CD4-positive, alpha-beta T cell (primary cell): ENCODE measurements at regions of chr16 and their contacts with region 1.

Region 1: DNA sequence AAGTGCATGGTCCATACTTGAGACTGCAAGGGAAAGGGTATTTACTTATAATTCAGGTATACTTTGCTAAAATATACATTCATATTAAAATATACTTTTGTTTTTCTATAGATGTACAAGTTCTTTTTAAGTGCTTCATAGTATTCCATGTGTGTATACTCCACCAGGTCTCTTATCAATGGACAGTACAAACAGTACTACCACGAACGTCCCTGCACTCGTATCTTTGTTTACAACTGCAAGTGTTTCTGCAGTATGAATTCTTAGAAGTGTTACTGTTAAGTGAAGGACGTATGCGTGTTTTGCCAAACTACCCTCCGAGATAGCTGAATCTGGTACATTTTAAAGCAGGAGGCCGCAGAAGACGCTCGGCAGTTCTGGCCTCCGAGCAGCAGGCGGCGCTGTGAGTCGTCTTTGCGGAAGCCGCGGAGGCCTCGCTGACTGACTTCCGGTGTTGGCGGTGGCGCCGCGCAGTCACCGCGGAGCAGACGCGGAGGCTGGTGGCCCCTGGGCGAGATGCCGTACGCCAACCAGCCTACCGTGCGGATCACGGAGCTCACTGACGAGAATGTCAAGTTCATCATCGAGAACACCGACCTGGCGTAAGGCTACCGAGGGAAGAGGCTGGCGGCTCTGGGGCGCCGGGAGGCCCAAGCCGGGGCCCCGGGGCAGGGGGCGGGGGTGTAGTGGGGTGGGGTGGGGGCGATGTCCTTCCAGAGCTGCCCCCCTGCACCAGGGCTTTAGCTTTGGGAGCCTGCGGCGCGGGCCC is at the start of gene POLR2C:
- DNase-seq: peak; percentile 86 to 96 (median 92)
- ATAC-seq: peak; percentile 96
- H3K4me3 ChIP-seq: peak within 1 kb of the TSS; percentile 79
- H3K4me3 Mint-ChIP-seq: peak within 1 kb of the TSS; percentile 100
- H3K27ac ChIP-seq: peak within 1 kb of the TSS; percentile 33 to 52
- H3K27ac Mint-ChIP-seq: peak within 1 kb of the TSS; percentile 92
- H3K4me1 ChIP-seq: peaks cover 32% of the 10 kb centered on the region
- H3K4me1 Mint-ChIP-seq: peaks cover 43% of the 10 kb centered on the region
- H3K27me3 ChIP-seq: no peaks in the 10 kb centered on the region
- H3K27me3 Mint-ChIP-seq: no peaks in the 10 kb centered on the region
- CTCF ChIP-seq: peak; percentile 99
- total RNA-seq, gene POLR2C: 124 to 125 TPM

Region 2: GRCh38 chr16:57091975-57092785 is 370.2 kb before region 1 on chr16 and contains the start of gene CPNE2:
- CTCF ChIA-PET with region 1: no interaction called
- POLR2A ChIA-PET with region 1: no interaction called
- intact Hi-C with region 1: loop called in 1 of 2 experiments (anchors 5 kb)
- DNase-seq: peak in 7 of 14 experiments; percentile 3 to 63 (median 34)
- ATAC-seq: peak; percentile 48
- H3K4me3 ChIP-seq: peak within 1 kb of the TSS; percentile 34
- H3K4me3 Mint-ChIP-seq: peak within 1 kb of the TSS; percentile 87
- H3K27ac ChIP-seq: no peak within 1 kb of the TSS
- H3K27ac Mint-ChIP-seq: no peak within 1 kb of the TSS
- H3K4me1 ChIP-seq: peaks cover 21% of the 10 kb centered on the region
- H3K4me1 Mint-ChIP-seq: peaks cover 11% of the 10 kb centered on the region
- H3K27me3 ChIP-seq: no peaks in the 10 kb centered on the region
- H3K27me3 Mint-ChIP-seq: no peaks in the 10 kb centered on the region
- CTCF ChIP-seq: no peak
- total RNA-seq, gene CPNE2: 2.2 to 3.5 TPM

Region 3: DNA sequence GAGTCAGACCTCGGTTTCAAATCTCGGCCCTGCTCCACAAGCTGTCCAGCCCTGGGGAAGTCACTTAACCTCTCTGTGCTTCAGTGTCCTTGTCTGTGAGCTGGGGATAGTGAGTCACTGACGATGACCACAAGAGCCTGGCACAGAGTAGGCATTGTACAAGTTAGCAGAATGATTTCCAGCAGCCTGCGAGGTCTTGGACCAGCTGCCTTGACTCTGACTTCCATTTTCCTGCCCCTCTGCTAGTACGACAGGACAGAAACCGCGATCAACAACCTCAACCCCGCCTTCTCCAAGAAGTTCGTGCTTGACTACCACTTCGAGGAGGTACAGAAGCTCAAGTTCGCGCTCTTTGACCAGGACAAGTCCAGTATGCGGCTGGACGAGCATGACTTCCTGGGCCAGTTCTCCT is 349.3 kb before region 1 on chr16:
- CTCF ChIA-PET with region 1: no interaction called
- POLR2A ChIA-PET with region 1: no interaction called
- intact Hi-C with region 1: no loop called
- DNase-seq: no peak
- ATAC-seq: no peak
- H3K4me3 ChIP-seq: no peak overlapping the region
- H3K4me3 Mint-ChIP-seq: no peak overlapping the region
- H3K27ac ChIP-seq: no peak overlapping the region
- H3K27ac Mint-ChIP-seq: no peak overlapping the region
- H3K4me1 ChIP-seq: no peaks in the 10 kb centered on the region
- H3K4me1 Mint-ChIP-seq: no peaks in the 10 kb centered on the region
- H3K27me3 ChIP-seq: no peaks in the 10 kb centered on the region
- H3K27me3 Mint-ChIP-seq: no peaks in the 10 kb centered on the region
- CTCF ChIP-seq: no peak

Region 4: DNA sequence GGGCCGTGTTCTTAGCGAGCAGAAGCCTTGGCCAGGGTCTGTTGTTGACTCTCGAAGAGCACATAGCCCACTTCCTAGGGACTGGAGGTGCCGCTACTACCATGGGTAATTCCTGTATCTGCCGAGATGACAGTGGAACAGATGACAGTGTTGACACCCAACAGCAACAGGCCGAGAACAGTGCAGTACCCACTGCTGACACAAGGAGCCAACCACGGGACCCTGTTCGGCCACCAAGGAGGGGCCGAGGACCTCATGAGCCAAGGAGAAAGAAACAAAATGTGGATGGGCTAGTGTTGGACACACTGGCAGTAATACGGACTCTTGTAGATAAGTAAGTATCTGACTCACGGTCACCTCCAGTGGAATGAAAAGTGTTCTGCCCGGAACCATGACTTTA is 257.7 kb before region 1 on chr16:
- CTCF ChIA-PET with region 1: no interaction called
- POLR2A ChIA-PET with region 1: no interaction called
- intact Hi-C with region 1: no loop called
- DNase-seq: no peak
- ATAC-seq: no peak
- H3K4me3 ChIP-seq: no peak overlapping the region
- H3K4me3 Mint-ChIP-seq: no peak overlapping the region
- H3K27ac ChIP-seq: no peak overlapping the region
- H3K27ac Mint-ChIP-seq: no peak overlapping the region
- H3K4me1 ChIP-seq: no peaks in the 10 kb centered on the region
- H3K4me1 Mint-ChIP-seq: peaks cover 6% of the 10 kb centered on the region
- H3K27me3 ChIP-seq: no peaks in the 10 kb centered on the region
- H3K27me3 Mint-ChIP-seq: no peaks in the 10 kb centered on the region
- CTCF ChIP-seq: no peak

Region 5: GRCh38 chr16:57394444-57394843 is 67.9 kb before region 1 on chr16:
- CTCF ChIA-PET with region 1: no interaction called
- POLR2A ChIA-PET with region 1: no interaction called
- intact Hi-C with region 1: no loop called
- DNase-seq: no peak
- ATAC-seq: no peak
- H3K4me3 ChIP-seq: no peak overlapping the region
- H3K4me3 Mint-ChIP-seq: no peak overlapping the region
- H3K27ac ChIP-seq: no peak overlapping the region
- H3K27ac Mint-ChIP-seq: no peak overlapping the region
- H3K4me1 ChIP-seq: no peaks in the 10 kb centered on the region
- H3K4me1 Mint-ChIP-seq: no peaks in the 10 kb centered on the region
- H3K27me3 ChIP-seq: no peaks in the 10 kb centered on the region
- H3K27me3 Mint-ChIP-seq: peaks cover 6% of the 10 kb centered on the region
- CTCF ChIP-seq: no peak

Region 6: GRCh38 chr16:57432989-57433388 is 29.4 kb before region 1 on chr16:
- CTCF ChIA-PET with region 1: interaction called, 6 read pairs
- POLR2A ChIA-PET with region 1: interaction called, 12 read pairs
- intact Hi-C with region 1: no loop called
- DNase-seq: peak in 1 of 14 experiments; percentile 43
- ATAC-seq: peak; percentile 41
- H3K4me3 ChIP-seq: no peak overlapping the region
- H3K4me3 Mint-ChIP-seq: no peak overlapping the region
- H3K27ac ChIP-seq: peak overlapping the region in 1 of 2 donors; percentile 38
- H3K27ac Mint-ChIP-seq: peak overlapping the region; percentile 84
- H3K4me1 ChIP-seq: peaks cover 22% of the 10 kb centered on the region
- H3K4me1 Mint-ChIP-seq: peaks cover 35% of the 10 kb centered on the region
- H3K27me3 ChIP-seq: no peaks in the 10 kb centered on the region
- H3K27me3 Mint-ChIP-seq: no peaks in the 10 kb centered on the region
- CTCF ChIP-seq: no peak

Region 7: DNA sequence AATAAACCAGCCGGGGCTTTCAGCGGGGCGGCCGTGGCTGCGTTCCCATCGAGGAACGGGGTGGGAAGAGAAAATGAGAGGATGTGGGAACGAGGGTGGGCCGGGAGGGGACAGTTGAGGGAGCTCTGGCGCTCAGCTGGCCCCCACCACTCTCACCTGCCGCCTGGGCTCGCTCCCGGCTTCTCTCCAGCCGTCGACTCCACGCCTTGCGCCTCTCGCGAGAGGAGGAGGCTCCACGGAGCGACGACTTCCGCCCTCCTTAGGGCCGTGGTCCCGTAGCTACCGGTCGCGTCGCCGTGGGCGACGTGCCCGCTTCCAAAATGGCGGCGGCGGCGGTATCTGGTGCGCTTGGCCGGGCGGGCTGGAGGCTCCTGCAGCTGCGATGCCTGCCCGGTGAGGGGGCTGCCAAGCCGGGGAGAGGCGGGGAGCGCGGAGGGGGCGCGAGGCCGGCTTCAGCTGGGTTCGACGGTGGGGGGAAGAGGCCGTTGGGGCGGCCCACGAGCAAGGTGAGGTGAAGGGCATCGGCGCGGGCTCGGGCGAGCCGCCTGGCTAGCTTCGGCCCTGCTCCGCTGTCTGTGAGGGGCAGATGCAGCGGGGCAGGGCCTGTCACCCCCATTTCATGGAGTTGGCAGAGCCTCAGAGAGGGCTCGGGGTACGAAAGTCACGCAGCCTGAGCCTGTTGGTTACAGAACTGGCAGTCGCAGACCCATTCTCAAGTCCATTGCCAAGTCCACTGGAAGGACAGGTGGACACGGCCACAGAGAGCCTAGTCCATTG is 15.0 kb before region 1 on chr16 and contains the starts of genes CIAPIN1 and COQ9:
- CTCF ChIA-PET with region 1: interaction called, 55 read pairs
- POLR2A ChIA-PET with region 1: interaction called, 82 read pairs
- intact Hi-C with region 1: loop called in 1 of 2 experiments (anchors 1 kb)
- DNase-seq: peak; percentile 83 to 97 (median 92)
- ATAC-seq: peak; percentile 99
- H3K4me3 ChIP-seq: peak within 1 kb of the TSS; percentile 96
- H3K4me3 Mint-ChIP-seq: peak within 1 kb of the TSS; percentile 96
- H3K27ac ChIP-seq: peak within 1 kb of the TSS; percentile 73 to 79
- H3K27ac Mint-ChIP-seq: peak within 1 kb of the TSS; percentile 88
- H3K4me1 ChIP-seq: peaks cover 29% of the 10 kb centered on the region
- H3K4me1 Mint-ChIP-seq: peaks cover 34% of the 10 kb centered on the region
- H3K27me3 ChIP-seq: no peaks in the 10 kb centered on the region
- H3K27me3 Mint-ChIP-seq: no peaks in the 10 kb centered on the region
- CTCF ChIP-seq: no peak
- total RNA-seq, gene CIAPIN1: 27.8 to 28.0 TPM
- total RNA-seq, gene COQ9: 7.0 to 7.6 TPM

Region 8: GRCh38 chr16:57475711-57476339 is 13.4 kb after region 1 on chr16:
- CTCF ChIA-PET with region 1: interaction called, 10 read pairs
- POLR2A ChIA-PET with region 1: interaction called, 13 read pairs
- intact Hi-C with region 1: no loop called
- DNase-seq: peak; percentile 31 to 88 (median 68)
- ATAC-seq: peak; percentile 97
- H3K4me3 ChIP-seq: no peak overlapping the region
- H3K4me3 Mint-ChIP-seq: peak overlapping the region; percentile 7
- H3K27ac ChIP-seq: no peak overlapping the region
- H3K27ac Mint-ChIP-seq: peak overlapping the region; percentile 51
- H3K4me1 ChIP-seq: peaks cover 21% of the 10 kb centered on the region
- H3K4me1 Mint-ChIP-seq: peaks cover 11% of the 10 kb centered on the region
- H3K27me3 ChIP-seq: no peaks in the 10 kb centered on the region
- H3K27me3 Mint-ChIP-seq: no peaks in the 10 kb centered on the region
- CTCF ChIP-seq: peak; percentile 76

Region 9: DNA sequence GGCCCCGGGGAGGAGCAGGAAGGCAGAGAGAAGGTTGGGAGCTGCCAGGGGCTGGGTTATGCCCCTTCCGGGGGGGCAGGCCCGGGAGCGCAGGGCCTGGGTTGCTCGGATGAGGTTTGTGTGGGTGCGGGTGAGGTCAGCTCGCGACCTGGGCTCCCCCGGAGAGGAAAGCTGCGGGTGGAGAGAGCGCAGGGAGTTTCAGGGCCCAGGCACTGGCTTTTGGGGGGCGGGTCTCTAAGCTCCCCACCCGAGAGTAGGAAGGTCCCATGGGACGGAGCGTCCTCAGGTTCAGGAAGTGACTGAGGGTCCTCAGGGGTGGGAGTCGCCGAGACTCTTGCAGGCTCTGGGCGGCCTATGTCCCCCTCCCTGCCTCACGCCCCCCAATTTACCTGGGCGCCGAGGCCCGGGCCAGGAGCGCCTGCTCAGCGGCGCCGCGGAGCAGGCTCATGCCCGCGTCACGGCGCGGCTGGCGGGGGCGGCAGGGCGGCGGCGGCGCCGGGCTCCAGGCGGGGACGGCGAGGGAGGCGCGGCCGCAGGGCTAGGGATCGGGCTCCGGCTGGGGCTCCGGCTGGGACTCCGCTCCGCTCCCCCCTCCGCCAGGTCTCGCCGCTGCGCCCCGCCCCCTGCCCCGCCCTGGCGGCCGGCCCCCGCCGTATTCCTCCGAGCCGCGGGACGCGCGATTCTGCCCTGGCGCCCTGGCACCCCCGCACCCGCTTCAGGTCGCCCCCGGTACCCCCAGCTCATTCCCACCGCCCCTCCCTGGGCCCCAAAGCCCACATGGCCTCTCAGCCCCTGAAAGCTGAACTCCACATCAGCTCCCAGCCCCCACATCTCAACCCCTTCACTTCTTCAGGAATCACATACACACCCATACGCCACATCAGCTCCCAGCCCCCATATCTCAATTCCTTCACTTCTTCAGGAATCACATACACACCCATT is 23.8 kb after region 1 on chr16 and contains the start of gene DOK4:
- CTCF ChIA-PET with region 1: interaction called, 8 read pairs
- POLR2A ChIA-PET with region 1: interaction called, 6 read pairs
- intact Hi-C with region 1: loop called in 1 of 2 experiments (anchors 1 kb)
- DNase-seq: peak; percentile 63 to 88 (median 76)
- ATAC-seq: peak; percentile 96
- H3K4me3 ChIP-seq: peak within 1 kb of the TSS; percentile 76
- H3K4me3 Mint-ChIP-seq: peak within 1 kb of the TSS; percentile 89
- H3K27ac ChIP-seq: no peak within 1 kb of the TSS
- H3K27ac Mint-ChIP-seq: peak within 1 kb of the TSS; percentile 69
- H3K4me1 ChIP-seq: peaks cover 22% of the 10 kb centered on the region
- H3K4me1 Mint-ChIP-seq: peaks cover 34% of the 10 kb centered on the region
- H3K27me3 ChIP-seq: no peaks in the 10 kb centered on the region
- H3K27me3 Mint-ChIP-seq: no peaks in the 10 kb centered on the region
- CTCF ChIP-seq: no peak
- total RNA-seq, gene DOK4: 2.4 to 2.9 TPM

Region 10: DNA sequence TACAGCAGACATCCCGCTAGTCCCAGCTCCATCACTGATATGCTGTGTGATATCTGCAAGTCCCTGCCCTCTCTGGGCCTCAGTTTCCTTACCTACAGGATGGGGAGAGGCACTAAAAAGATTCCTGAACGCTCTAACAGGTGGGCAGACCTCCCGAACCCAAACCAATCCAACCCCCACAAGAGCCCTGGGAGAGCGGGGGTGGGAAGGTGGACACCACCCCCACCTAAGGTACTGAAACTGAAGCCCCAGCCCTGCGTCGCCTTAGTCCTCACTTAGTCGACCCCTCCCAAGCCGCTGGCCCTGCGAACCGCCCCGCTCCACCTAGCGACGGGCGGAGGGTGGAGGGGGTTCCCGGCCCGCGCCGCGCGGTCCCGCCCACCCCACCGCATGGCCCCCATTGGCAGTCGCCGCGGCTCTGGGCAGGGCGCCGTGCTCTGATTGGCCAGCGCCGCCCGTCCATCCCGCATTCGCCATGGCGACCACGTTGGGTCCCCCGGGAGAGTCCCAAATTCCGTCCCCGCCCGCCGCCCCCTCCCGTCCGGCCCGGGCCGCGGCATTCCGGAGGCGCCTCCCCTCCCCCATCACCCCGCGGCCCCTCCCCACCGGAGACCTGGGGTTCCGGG is 73.4 kb after region 1 on chr16:
- CTCF ChIA-PET with region 1: interaction called, 5 read pairs
- POLR2A ChIA-PET with region 1: interaction called, 18 read pairs
- intact Hi-C with region 1: no loop called
- DNase-seq: peak; percentile 87 to 98 (median 91)
- ATAC-seq: peak; percentile 85
- H3K4me3 ChIP-seq: peak overlapping the region; percentile 59
- H3K4me3 Mint-ChIP-seq: peak overlapping the region; percentile 89
- H3K27ac ChIP-seq: peak overlapping the region; percentile 94
- H3K27ac Mint-ChIP-seq: peak overlapping the region; percentile 96
- H3K4me1 ChIP-seq: peaks cover 79% of the 10 kb centered on the region
- H3K4me1 Mint-ChIP-seq: peaks cover 78% of the 10 kb centered on the region
- H3K27me3 ChIP-seq: no peaks in the 10 kb centered on the region
- H3K27me3 Mint-ChIP-seq: no peaks in the 10 kb centered on the region
- CTCF ChIP-seq: no peak